Naive thymus-derived CD4-positive, alpha-beta T cell (primary cell): ENCODE measurements at regions of chr11 and their contacts with region 1.

Region 1: GRCh38 chr11:32435511-32435941 is at the start of gene WT1:
- DNase-seq: no peak
- ATAC-seq: no peak
- H3K4me3 ChIP-seq: no peak within 1 kb of the TSS
- H3K4me3 Mint-ChIP-seq: peak within 1 kb of the TSS in 7 of 10 donors; percentile 24 to 72 (median 37)
- H3K27ac ChIP-seq: no peak within 1 kb of the TSS
- H3K27ac Mint-ChIP-seq: peak within 1 kb of the TSS in 1 of 9 donors; percentile 77
- H3K4me1 ChIP-seq: no peaks in the 10 kb centered on the region
- H3K4me1 Mint-ChIP-seq: peaks cover 18 to 51% (median 47%) of the 10 kb centered on the region in 7 donors
- H3K27me3 ChIP-seq: peaks cover 5 to 11% of the 10 kb centered on the region in 2 donors
- H3K27me3 Mint-ChIP-seq: peaks cover 64 to 90% (median 79%) of the 10 kb centered on the region in 5 donors
- total RNA-seq, gene WT1: not detected

Region 2: DNA sequence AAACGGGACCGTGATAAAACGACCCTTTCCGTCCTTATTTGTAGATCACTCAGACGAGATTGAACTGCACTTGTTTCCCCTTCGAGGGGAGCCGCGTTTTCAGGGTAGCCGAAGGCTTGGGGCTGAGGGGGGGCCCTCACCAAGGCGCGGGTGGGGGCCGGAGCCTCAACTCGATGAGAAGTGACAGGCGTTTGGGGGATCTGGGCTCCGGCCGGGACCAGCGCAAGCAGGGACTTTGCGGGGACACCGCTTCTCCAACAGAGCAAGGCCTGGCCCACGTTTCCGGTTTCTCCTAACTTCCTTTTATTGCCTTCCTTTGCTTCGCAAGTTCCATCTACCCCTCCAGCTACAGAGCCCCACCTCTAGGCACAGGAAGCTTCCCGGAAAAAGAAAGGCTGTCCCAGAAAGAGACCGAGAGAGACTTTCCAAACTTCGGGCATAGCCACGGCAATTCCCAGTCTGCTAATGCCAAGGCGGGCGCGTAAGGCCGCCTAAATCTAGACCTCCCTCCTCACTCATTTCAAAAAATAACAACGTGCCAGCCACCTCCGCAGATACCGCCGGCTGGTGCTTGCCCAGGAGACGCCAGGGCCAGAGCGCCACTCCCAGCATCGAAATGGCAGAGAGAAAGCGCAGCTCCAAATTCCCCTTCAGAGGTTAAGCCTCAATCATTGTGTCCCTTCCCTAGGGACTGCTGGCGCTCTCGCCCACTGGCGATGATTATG is 631.1 kb before region 1 on chr11:
- CTCF ChIA-PET with region 1: no interaction called
- POLR2A ChIA-PET with region 1: no interaction called
- intact Hi-C with region 1: loop called in 1 of 2 experiments (anchors 5 kb)
- DNase-seq: no peak
- ATAC-seq: no peak
- H3K4me3 ChIP-seq: no peak overlapping the region
- H3K4me3 Mint-ChIP-seq: peak overlapping the region; percentile 36 to 82 (median 72)
- H3K27ac ChIP-seq: no peak overlapping the region
- H3K27ac Mint-ChIP-seq: peak overlapping the region in 3 of 9 donors; percentile 5 to 78 (median 34)
- H3K4me1 ChIP-seq: peaks cover 5 to 26% of the 10 kb centered on the region in 2 donors
- H3K4me1 Mint-ChIP-seq: peaks cover 30 to 60% (median 52%) of the 10 kb centered on the region in 7 donors
- H3K27me3 ChIP-seq: peaks cover 22 to 68% of the 10 kb centered on the region in 2 donors
- H3K27me3 Mint-ChIP-seq: peaks cover 86 to 96% (median 87%) of the 10 kb centered on the region in 5 donors

Region 3: GRCh38 chr11:31817054-31817620 is 618.4 kb before region 1 on chr11:
- CTCF ChIA-PET with region 1: no interaction called
- POLR2A ChIA-PET with region 1: no interaction called
- intact Hi-C with region 1: loop called in 1 of 2 experiments (anchors 5 kb)
- DNase-seq: no peak
- ATAC-seq: no peak
- H3K4me3 ChIP-seq: peak overlapping the region; percentile 24
- H3K4me3 Mint-ChIP-seq: peak overlapping the region; percentile 45 to 83 (median 76)
- H3K27ac ChIP-seq: no peak overlapping the region
- H3K27ac Mint-ChIP-seq: peak overlapping the region in 1 of 9 donors; percentile 71
- H3K4me1 ChIP-seq: peaks cover 12 to 17% of the 10 kb centered on the region in 2 donors
- H3K4me1 Mint-ChIP-seq: peaks cover 7 to 53% (median 39%) of the 10 kb centered on the region in 7 donors
- H3K27me3 ChIP-seq: peaks cover 7 to 57% of the 10 kb centered on the region in 2 donors
- H3K27me3 Mint-ChIP-seq: peaks cover 63 to 88% (median 67%) of the 10 kb centered on the region in 5 donors